ENCODE measurements at regions of chr12 and their contacts with region 1.

Region 1: DNA sequence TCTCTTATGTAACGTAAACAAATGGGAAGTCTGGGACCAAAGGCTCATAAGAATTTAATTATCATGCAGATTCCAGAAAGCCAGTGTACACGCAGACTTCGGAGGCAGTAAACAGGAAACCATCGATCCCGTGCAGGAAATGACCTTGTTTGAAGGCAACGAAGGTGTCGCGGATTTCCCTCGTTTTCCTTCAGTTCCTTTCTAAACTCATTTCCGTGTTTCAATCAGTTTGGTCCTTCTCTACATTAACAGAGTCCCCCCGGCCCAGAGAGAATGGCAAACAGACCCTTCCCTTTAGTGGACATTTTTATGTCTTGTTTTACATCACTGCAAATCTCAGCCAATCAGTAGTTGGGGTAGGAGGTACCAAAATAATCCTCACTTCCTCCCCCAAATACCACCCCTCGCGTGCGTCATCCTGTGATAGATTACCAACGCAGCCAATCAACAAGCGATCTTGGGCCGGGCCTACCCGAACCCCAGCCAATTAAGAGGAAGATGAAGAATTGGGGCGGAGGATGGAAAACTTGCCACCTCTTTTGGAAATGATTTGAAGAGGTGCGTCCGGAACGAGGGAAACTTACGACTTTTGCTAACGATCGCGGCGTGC is 6.1 kb upstream of the FOXJ2 start:
- DNase-seq: peak; percentile 99 to 100
- H3K4me3 ChIP-seq: peak overlapping the region; percentile 92
- H3K4me3 Mint-ChIP-seq: peak overlapping the region; percentile 100
- H3K27ac Mint-ChIP-seq: peak overlapping the region; percentile 100
- H3K4me1 ChIP-seq: no peaks in the 10 kb centered on the region; the same call in 1 of the 2 replicates
- H3K4me1 Mint-ChIP-seq: peaks cover 14% of the 10 kb centered on the region
- H3K27me3 ChIP-seq: no peaks in the 10 kb centered on the region
- H3K27me3 Mint-ChIP-seq: no peaks in the 10 kb centered on the region
- CTCF ChIP-seq: no peak

Region 2: DNA sequence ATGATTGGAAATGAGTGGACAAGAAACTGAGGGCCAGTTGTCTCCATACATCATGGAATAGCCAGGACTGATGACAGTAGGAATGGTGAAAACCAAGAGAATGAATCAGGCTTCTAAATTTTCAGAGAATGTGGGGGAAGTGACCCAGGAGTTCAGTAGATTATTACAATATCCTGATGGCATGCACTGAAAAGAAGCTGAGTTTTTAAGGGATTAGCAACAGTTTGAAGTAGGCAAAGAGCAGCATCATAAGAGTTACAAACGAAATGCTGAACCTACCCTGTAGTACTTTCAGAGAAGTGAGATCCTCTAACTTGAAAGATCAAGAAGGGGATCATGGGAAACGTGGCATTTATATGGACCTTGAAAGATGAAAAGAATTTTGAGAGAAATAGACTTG is 166.8 kb before region 1 on chr12:
- CTCF ChIA-PET with region 1: no interaction called
- POLR2A ChIA-PET with region 1: no interaction called
- intact Hi-C with region 1: no loop called
- DNase-seq: peak in 1 of 2 experiments; percentile 7
- H3K4me3 ChIP-seq: no peak overlapping the region
- H3K4me3 Mint-ChIP-seq: no peak overlapping the region
- H3K27ac Mint-ChIP-seq: peak overlapping the region; percentile 92
- H3K4me1 ChIP-seq: peaks cover 56% of the 10 kb centered on the region
- H3K4me1 Mint-ChIP-seq: peaks cover 52% of the 10 kb centered on the region
- H3K27me3 ChIP-seq: no peaks in the 10 kb centered on the region
- H3K27me3 Mint-ChIP-seq: no peaks in the 10 kb centered on the region
- CTCF ChIP-seq: no peak

Region 3: GRCh38 chr12:7870335-7870734 is 156.1 kb before region 1 on chr12:
- CTCF ChIA-PET with region 1: no interaction called
- POLR2A ChIA-PET with region 1: interaction called, 11 read pairs
- intact Hi-C with region 1: no loop called
- DNase-seq: no peak
- H3K4me3 ChIP-seq: no peak overlapping the region
- H3K4me3 Mint-ChIP-seq: no peak overlapping the region
- H3K27ac Mint-ChIP-seq: no peak overlapping the region
- H3K4me1 ChIP-seq: peaks cover 18% of the 10 kb centered on the region
- H3K4me1 Mint-ChIP-seq: peaks cover 13% of the 10 kb centered on the region
- H3K27me3 ChIP-seq: no peaks in the 10 kb centered on the region
- H3K27me3 Mint-ChIP-seq: no peaks in the 10 kb centered on the region
- CTCF ChIP-seq: no peak

Region 4: GRCh38 chr12:7948589-7949260 is 77.7 kb before region 1 on chr12:
- CTCF ChIA-PET with region 1: no interaction called
- POLR2A ChIA-PET with region 1: interaction called, 11 read pairs
- intact Hi-C with region 1: no loop called
- DNase-seq: no peak
- H3K4me3 ChIP-seq: no peak overlapping the region
- H3K4me3 Mint-ChIP-seq: peak overlapping the region; percentile 13
- H3K27ac Mint-ChIP-seq: peak overlapping the region; percentile 18
- H3K4me1 ChIP-seq: peaks cover 22% of the 10 kb centered on the region
- H3K4me1 Mint-ChIP-seq: peaks cover 18% of the 10 kb centered on the region
- H3K27me3 ChIP-seq: no peaks in the 10 kb centered on the region
- H3K27me3 Mint-ChIP-seq: no peaks in the 10 kb centered on the region
- CTCF ChIP-seq: no peak

Region 5: GRCh38 chr12:8078398-8078797 is 52.0 kb after region 1 on chr12:
- CTCF ChIA-PET with region 1: interaction called, 3 read pairs
- POLR2A ChIA-PET with region 1: interaction called, 3 read pairs
- intact Hi-C with region 1: loop called (anchors 1 kb)
- DNase-seq: peak; percentile 63 to 74
- H3K4me3 ChIP-seq: no peak overlapping the region
- H3K4me3 Mint-ChIP-seq: no peak overlapping the region
- H3K27ac Mint-ChIP-seq: no peak overlapping the region
- H3K4me1 ChIP-seq: 0 out of 2 replicates have a peak, but pooled peaks cover 4% of the 10 kb centered on the region
- H3K4me1 Mint-ChIP-seq: peaks cover 14% of the 10 kb centered on the region
- H3K27me3 ChIP-seq: no peaks in the 10 kb centered on the region
- H3K27me3 Mint-ChIP-seq: no peaks in the 10 kb centered on the region
- CTCF ChIP-seq: peak; percentile 60 to 64